IMR-90 (cell line): ENCODE measurements at regions of chr6 and their contacts with region 1.

Region 1: GRCh38 chr6:163945808-163946207 is 531.3 kb downstream of the QKI start:
- DNase-seq: no peak
- ATAC-seq: no peak
- H3K4me3 ChIP-seq: no peak overlapping the region
- H3K27ac ChIP-seq: no peak overlapping the region
- H3K4me1 ChIP-seq: peaks cover 4% of the 10 kb centered on the region; the same call in 1 of the 2 replicates
- H3K27me3 ChIP-seq: no peaks in the 10 kb centered on the region
- CTCF ChIP-seq: no peak
- POLR2A ChIP-seq: no peak
- RAD21 ChIP-seq: no peak

Region 2: GRCh38 chr6:163888030-163888819 is 57.6 kb before region 1 on chr6:
- CTCF ChIA-PET with region 1: no interaction called
- POLR2A ChIA-PET with region 1: no interaction called
- dilution Hi-C with region 1: no loop called
- in situ Hi-C with region 1: no loop called
- intact Hi-C with region 1: loop called (anchors 2 kb)
- DNase-seq: no peak
- ATAC-seq: no peak
- H3K4me3 ChIP-seq: no peak overlapping the region
- H3K27ac ChIP-seq: no peak overlapping the region
- H3K4me1 ChIP-seq: no peaks in the 10 kb centered on the region
- H3K27me3 ChIP-seq: no peaks in the 10 kb centered on the region; the same call in 1 of the 2 replicates
- CTCF ChIP-seq: no peak
- POLR2A ChIP-seq: no peak
- RAD21 ChIP-seq: no peak